Activated CD4-positive, alpha-beta memory T cell treated with anti-CD3 and anti-CD28 coated beads for 36 hours (primary cell): ENCODE measurements at regions of chrX and their contacts with region 1.

Region 1: DNA sequence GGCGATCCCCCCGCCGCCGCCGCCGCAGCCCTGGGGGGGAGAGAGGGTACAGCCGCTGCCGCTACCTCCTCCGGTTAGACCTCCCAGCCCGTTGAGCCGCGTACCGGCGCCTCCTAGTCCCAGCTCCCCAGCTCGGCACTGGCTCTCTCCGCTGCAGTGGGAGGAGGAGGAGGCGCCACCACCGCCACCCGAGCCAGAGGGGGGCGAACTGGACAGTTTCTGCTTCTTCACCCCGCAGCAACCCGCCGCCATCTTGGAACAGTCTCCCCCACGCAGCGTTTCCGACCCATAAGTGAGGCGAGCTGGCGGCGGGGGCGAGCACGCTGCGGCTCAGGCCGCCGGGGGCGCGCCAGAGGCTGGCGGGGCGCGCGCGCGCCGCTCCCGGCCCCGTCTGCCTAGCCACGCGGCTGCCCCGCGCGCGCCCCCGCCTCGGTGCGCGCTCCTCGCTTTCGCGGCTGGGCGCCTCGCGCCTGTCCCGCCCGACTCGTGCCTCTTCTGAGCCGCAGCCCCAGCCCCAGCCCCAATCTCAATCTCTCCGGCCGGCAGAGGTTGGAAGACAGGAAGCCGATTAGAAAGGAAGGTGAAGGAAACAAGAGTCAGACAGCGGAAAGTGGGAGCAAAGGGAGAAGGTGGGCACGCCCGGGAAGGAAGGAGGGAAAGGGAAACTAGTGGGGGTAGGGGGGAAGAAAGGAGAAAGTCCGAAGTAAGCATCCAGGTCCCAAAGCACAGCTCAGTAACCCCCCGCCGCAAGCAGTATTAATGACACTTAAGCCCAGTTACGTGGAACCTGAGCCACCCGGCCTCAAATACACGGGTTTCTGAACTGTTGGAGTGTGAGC is at the start of gene AMMECR1:
- DNase-seq: peak; percentile 84
- H3K4me3 Mint-ChIP-seq: peak within 1 kb of the TSS; percentile 93
- H3K27ac Mint-ChIP-seq: peak within 1 kb of the TSS; percentile 95
- H3K4me1 Mint-ChIP-seq: peaks cover 27% of the 10 kb centered on the region
- H3K27me3 Mint-ChIP-seq: no peaks in the 10 kb centered on the region
- total RNA-seq, gene AMMECR1: 8.0 to 8.9 TPM

Region 2: GRCh38 chrX:110156167-110156754 is 161.8 kb before region 1 on chrX:
- CTCF ChIA-PET with region 1: interaction called, 6 read pairs
- POLR2A ChIA-PET with region 1: no interaction called
- intact Hi-C with region 1: loop called (anchors 2 kb)
- DNase-seq: no peak
- H3K4me3 Mint-ChIP-seq: no peak overlapping the region
- H3K27ac Mint-ChIP-seq: no peak overlapping the region
- H3K4me1 Mint-ChIP-seq: peaks cover 12% of the 10 kb centered on the region
- H3K27me3 Mint-ChIP-seq: no peaks in the 10 kb centered on the region

Region 3: DNA sequence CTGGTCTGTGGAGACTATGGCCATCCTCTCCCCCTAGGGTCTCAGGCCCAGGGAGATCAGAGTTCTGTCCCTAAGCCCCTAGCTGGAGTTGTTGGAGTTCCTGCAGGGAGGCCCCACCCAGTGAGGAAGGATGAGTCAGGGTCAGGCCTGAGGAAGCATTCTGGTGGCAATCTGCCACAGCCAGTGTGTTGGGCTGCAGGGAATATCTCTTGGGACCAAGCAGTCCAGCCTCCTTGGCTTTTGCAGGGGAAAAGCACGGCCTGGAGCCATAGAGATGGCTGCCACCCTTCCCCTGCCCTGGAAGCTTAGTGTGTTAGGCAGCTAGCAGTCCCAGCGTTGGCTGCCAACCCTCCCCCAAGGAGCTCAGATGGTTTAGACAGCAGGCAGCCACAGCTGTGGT is 243.0 kb after region 1 on chrX:
- CTCF ChIA-PET with region 1: no interaction called
- POLR2A ChIA-PET with region 1: no interaction called
- intact Hi-C with region 1: no loop called
- DNase-seq: no peak
- H3K4me3 Mint-ChIP-seq: no peak overlapping the region
- H3K27ac Mint-ChIP-seq: no peak overlapping the region
- H3K4me1 Mint-ChIP-seq: no peaks in the 10 kb centered on the region
- H3K27me3 Mint-ChIP-seq: no peaks in the 10 kb centered on the region

Region 4: GRCh38 chrX:110678593-110678992 is 360.6 kb after region 1 on chrX:
- CTCF ChIA-PET with region 1: no interaction called
- POLR2A ChIA-PET with region 1: no interaction called
- intact Hi-C with region 1: no loop called
- DNase-seq: no peak
- H3K4me3 Mint-ChIP-seq: no peak overlapping the region
- H3K27ac Mint-ChIP-seq: no peak overlapping the region
- H3K4me1 Mint-ChIP-seq: no peaks in the 10 kb centered on the region
- H3K27me3 Mint-ChIP-seq: no peaks in the 10 kb centered on the region